IMR-90 (cell line): ENCODE measurements at regions of chr10 and their contacts with region 1.

Region 1: GRCh38 chr10:44801383-44802327 is 109.5 kb upstream of the TMEM72 start:
- DNase-seq: peak; percentile 97
- ATAC-seq: peak; percentile 77
- H3K4me3 ChIP-seq: no peak overlapping the region
- H3K27ac ChIP-seq: no peak overlapping the region; the same call in 1 of the 2 replicates
- H3K4me1 ChIP-seq: 0 out of 2 replicates have a peak, but pooled peaks cover 3% of the 10 kb centered on the region
- H3K27me3 ChIP-seq: no peaks in the 10 kb centered on the region
- CTCF ChIP-seq: no peak
- POLR2A ChIP-seq: no peak
- RAD21 ChIP-seq: no peak

Region 2: DNA sequence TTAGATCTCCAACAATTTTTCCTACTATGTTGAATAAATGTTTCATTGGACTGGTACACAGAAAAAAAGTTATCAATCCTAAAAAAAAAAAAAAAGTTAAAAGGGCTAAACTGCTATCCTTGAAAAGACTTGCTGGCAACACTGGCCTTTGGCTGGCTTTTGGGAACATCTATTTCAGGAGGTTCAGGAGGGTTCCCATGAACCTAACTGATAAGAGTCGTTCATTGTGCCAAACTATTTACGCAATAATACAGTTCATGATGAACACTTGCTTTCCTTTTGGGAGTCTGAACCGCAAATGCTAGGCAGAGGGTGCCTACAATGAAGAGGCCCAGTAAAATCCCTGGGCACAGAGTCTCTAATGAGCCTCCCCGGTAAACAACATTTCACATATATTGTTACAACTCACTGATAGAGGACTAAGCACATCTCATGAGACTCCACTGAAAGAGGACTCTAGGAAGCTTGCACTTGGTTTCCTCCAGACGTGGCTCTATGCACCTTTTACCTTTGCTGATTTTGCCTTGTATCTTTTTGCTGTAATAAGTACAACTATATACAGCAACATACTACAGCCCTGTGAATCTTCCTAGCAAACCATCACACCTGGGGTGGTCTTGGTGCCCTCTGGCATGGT is 825.9 kb after region 1 on chr10:
- CTCF ChIA-PET with region 1: no interaction called
- POLR2A ChIA-PET with region 1: no interaction called
- dilution Hi-C with region 1: no loop called
- in situ Hi-C with region 1: no loop called
- intact Hi-C with region 1: loop called (anchors 5 kb)
- DNase-seq: no peak
- ATAC-seq: no peak
- H3K4me3 ChIP-seq: no peak overlapping the region
- H3K27ac ChIP-seq: no peak overlapping the region
- H3K4me1 ChIP-seq: no peaks in the 10 kb centered on the region
- H3K27me3 ChIP-seq: no peaks in the 10 kb centered on the region
- CTCF ChIP-seq: no peak
- POLR2A ChIP-seq: no peak
- RAD21 ChIP-seq: no peak